ENCODE measurements at regions of chr10 and their contacts with region 1.

Region 1: DNA sequence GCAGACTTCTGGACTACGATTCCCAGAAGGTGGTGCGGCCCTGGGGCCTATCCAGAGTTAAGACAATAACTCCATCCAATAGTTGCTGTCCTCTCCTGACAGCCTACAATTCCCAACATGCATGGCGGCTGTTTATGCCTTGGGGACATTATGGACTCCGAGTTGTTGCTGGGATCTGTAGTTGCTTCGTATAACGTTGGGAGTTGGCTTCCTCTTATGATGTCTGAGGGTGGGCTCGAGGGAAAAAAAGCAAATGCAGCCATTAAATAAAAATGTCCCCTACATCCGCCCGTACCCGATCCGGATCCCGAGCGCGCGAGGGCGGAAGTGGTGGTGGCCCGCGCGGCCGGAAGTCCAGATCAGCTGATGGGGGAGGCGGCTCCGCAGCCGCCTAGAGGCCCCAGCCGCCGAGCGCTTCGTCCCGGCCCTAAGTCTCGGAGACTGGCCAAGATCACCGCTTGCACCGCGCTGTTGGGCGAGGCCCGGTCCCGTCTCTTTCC is at the start of gene ZSWIM8:
- DNase-seq: peak; percentile 95
- H3K4me3 Mint-ChIP-seq: peak within 1 kb of the TSS; percentile 78
- H3K27ac Mint-ChIP-seq: peak within 1 kb of the TSS; percentile 84
- H3K4me1 Mint-ChIP-seq: peaks cover 28% of the 10 kb centered on the region
- H3K27me3 Mint-ChIP-seq: no peaks in the 10 kb centered on the region
- CTCF ChIP-seq: no peak
- total RNA-seq, gene ZSWIM8: 84.2 and 112 TPM in 2 replicates

Region 2: DNA sequence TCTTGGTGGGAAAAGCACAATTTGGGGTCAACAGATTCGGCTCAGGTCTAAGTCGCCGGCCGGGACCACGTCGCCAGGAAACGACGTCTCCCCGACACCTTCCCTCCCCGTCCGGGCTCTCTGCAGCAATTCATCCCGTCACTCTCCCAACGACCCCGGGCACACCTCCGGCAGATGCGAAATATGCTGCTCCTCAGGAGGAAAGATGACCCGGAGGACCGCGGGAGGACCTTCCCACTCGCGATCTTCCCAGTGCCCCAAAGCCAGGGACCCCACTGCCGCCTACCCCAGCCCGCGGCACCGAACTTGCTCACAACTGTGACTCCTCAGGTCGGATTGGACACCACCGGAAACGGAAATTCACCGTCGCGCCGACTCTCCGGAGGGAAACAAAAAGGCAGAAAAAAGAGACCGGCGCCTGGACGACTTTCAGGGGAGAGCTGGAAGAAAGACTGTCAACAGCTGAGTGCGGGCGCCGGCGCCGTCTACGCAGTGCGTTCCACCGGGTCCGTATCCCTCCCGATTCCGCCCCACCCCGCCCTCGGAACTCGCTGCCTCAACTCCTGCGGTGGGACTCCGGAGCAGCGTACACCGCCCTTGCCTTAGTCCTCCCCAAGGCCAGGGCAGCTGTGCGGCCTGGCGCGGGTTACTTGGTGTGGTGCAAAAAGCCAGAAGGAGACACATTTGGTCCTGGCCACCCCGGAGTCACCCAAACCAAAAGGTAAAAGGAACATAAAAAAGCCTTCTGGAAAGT is 54.9 kb before region 1 on chr10:
- CTCF ChIA-PET with region 1: interaction called, 4 read pairs
- POLR2A ChIA-PET with region 1: interaction called, 79 read pairs
- intact Hi-C with region 1: no loop called
- DNase-seq: peak; percentile 93
- H3K4me3 Mint-ChIP-seq: peak overlapping the region; percentile 99
- H3K27ac Mint-ChIP-seq: peak overlapping the region; percentile 97
- H3K4me1 Mint-ChIP-seq: peaks cover 6% of the 10 kb centered on the region
- H3K27me3 Mint-ChIP-seq: no peaks in the 10 kb centered on the region
- CTCF ChIP-seq: no peak

Region 3: DNA sequence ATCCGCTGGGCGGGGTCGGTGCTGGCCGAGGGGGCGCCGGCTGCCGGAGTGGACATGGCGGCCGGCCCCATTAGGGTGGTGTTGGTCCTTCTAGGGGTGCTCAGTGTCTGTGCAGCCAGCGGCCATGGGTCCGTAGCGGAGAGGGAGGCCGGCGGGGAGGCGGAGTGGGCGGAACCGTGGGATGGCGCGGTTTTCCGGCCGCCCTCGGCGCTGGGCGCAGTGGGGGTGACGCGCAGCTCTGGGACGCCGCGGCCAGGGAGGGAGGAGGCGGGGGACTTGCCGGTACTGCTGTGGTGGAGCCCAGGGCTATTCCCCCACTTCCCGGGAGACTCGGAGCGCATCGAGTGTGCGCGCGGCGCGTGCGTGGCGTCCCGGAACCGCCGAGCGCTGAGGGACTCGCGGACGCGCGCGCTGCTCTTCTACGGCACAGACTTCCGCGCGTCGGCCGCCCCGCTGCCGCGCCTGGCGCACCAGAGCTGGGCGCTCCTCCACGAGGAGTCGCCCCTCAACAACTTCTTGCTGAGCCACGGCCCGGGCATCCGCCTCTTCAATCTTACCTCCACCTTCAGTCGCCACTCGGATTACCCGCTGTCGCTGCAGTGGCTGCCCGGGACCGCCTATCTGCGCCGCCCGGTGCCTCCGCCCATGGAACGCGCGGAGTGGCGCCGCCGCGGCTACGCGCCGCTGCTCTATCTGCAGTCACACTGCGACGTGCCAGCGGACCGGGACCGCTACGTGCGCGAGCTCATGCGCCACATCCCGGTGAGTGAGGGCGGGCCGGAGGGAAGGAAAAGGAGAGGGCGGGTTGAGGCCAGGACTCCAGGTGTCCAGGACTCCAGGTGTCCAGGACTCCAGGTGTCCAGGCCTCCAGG is 12.8 kb before region 1 on chr10:
- CTCF ChIA-PET with region 1: interaction called, 4 read pairs
- POLR2A ChIA-PET with region 1: interaction called, 202 read pairs
- intact Hi-C with region 1: loop called (anchors 1 kb)
- DNase-seq: peak; percentile 73
- H3K4me3 Mint-ChIP-seq: peak overlapping the region; percentile 92
- H3K27ac Mint-ChIP-seq: peak overlapping the region; percentile 79
- H3K4me1 Mint-ChIP-seq: peaks cover 31% of the 10 kb centered on the region
- H3K27me3 Mint-ChIP-seq: no peaks in the 10 kb centered on the region
- CTCF ChIP-seq: no peak

Region 4: DNA sequence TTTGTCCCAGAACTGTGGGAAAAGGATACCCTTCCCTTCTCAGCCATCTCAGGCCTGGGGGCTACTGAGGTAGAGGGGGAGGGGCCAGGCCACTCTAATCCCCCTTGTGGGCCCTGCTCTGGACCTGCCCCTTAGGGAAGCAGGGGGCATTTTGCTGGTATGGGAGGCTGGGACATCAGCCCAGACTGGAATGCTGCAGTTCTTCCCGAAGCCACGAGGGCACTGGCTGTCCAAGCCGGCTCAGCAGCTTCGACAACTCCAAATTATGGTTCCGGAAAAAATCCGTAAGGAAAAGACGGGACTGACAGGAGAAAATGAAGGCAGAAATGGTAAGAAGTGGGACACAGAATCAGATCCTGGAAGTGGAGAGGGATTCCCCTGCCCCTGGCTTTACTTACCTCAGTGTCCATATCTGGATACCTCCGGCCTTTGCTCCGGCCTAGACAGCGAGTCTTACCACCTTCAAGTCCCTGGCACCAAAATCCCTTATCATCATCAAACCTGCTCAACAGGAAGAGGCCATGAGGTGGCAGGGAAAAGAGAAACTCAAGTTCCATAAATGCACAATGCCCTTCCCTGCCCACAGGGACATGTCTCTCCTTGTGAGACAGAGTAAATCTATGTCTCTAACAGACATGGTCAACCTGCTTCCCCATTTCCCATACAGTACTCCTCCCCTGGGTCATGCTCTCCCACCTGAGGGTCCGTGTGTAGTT is 17.2 kb after region 1 on chr10:
- CTCF ChIA-PET with region 1: interaction called, 6 read pairs
- POLR2A ChIA-PET with region 1: interaction called, 11 read pairs
- intact Hi-C with region 1: no loop called
- DNase-seq: no peak
- H3K4me3 Mint-ChIP-seq: no peak overlapping the region
- H3K27ac Mint-ChIP-seq: no peak overlapping the region
- H3K4me1 Mint-ChIP-seq: peaks cover 11% of the 10 kb centered on the region
- H3K27me3 Mint-ChIP-seq: no peaks in the 10 kb centered on the region
- CTCF ChIP-seq: no peak

Region 5: DNA sequence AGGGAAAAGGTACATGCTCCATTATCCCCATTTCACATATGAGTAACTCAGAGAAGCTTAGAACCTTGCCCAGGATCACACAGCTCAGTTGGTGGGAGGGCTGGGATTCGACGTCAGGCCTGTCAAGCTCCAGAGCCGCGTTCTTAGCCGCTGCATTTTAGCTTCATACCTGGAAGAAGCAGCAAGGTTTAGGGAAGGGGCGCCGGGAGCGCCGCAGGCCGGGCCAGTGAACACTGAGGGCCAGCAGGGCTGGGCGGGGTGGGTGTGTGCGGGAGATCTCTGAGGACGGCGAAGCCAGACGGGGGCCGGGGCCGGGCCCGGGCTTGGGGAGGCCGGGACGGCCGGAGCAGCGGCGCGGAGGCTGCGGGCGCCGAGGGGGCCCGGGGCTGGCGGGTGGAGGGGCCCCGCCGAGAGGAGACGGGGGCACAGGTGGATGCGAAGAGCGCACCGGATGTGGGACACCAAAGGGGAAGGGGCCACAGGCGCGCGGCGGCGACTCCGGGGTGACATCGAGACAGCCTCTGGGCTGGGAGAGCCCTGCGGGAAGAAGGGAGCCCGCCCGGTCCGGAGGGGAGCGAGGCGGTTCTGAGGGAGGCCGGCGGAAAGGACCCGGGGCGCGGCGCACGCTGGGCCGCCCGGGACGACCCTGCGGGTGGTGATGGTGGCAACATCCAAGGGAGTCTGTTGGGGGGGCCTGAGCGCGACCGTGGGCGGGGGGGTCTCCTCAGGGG is 25.6 kb after region 1 on chr10:
- CTCF ChIA-PET with region 1: interaction called, 3 read pairs
- POLR2A ChIA-PET with region 1: interaction called, 53 read pairs
- intact Hi-C with region 1: no loop called
- DNase-seq: no peak
- H3K4me3 Mint-ChIP-seq: peak overlapping the region; percentile 72
- H3K27ac Mint-ChIP-seq: peak overlapping the region; percentile 19
- H3K4me1 Mint-ChIP-seq: peaks cover 14% of the 10 kb centered on the region
- H3K27me3 Mint-ChIP-seq: no peaks in the 10 kb centered on the region
- CTCF ChIP-seq: no peak

Region 6: GRCh38 chr10:73926152-73926764 is 141.0 kb after region 1 on chr10:
- CTCF ChIA-PET with region 1: no interaction called
- POLR2A ChIA-PET with region 1: no interaction called
- intact Hi-C with region 1: no loop called
- DNase-seq: no peak
- H3K4me3 Mint-ChIP-seq: no peak overlapping the region
- H3K27ac Mint-ChIP-seq: no peak overlapping the region
- H3K4me1 Mint-ChIP-seq: peaks cover 5% of the 10 kb centered on the region
- H3K27me3 Mint-ChIP-seq: no peaks in the 10 kb centered on the region
- CTCF ChIP-seq: no peak